Activated CD8-positive, alpha-beta T cell treated with anti-CD3 and anti-CD28 coated beads for 36 hours (primary cell): ENCODE measurements at regions of chr16 and their contacts with region 1.

Region 1: DNA sequence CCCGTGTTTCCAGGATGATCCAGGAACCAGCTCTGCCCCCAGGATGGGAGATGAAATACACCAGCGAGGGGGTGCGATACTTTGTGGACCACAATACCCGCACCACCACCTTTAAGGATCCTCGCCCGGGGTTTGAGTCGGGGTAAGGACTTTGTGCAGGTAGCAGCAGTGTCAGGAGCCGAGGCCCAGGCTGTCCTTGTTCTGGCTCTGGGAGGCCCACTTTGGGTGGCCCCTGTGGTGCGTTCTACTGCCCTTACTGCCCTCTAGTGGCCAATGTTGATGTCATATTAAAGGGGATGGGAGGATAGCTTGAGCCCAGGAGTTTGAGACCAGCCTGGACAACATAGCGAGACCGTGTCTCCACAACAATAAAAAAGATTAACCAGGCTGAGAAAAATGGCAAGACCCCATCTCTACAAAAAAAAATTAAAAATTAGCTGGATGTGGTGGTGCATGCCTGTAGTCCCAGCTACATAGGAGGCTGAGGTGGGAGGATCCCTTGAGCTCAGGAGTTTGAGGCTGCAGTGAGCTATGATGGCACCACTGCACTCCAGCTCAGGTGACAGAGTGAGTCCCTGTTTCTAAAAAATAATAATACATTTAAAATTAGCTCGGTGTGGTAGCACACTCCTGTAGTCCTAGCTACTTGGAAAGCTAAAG is 20.9 kb upstream of the CLEC18A start:
- DNase-seq: peak; percentile 66
- ATAC-seq: peak; percentile 88
- H3K4me3 Mint-ChIP-seq: no peak overlapping the region
- H3K27ac Mint-ChIP-seq: no peak overlapping the region
- H3K4me1 Mint-ChIP-seq: no peaks in the 10 kb centered on the region
- H3K27me3 Mint-ChIP-seq: no peaks in the 10 kb centered on the region
- CTCF ChIP-seq: peak; percentile 78

Region 2: DNA sequence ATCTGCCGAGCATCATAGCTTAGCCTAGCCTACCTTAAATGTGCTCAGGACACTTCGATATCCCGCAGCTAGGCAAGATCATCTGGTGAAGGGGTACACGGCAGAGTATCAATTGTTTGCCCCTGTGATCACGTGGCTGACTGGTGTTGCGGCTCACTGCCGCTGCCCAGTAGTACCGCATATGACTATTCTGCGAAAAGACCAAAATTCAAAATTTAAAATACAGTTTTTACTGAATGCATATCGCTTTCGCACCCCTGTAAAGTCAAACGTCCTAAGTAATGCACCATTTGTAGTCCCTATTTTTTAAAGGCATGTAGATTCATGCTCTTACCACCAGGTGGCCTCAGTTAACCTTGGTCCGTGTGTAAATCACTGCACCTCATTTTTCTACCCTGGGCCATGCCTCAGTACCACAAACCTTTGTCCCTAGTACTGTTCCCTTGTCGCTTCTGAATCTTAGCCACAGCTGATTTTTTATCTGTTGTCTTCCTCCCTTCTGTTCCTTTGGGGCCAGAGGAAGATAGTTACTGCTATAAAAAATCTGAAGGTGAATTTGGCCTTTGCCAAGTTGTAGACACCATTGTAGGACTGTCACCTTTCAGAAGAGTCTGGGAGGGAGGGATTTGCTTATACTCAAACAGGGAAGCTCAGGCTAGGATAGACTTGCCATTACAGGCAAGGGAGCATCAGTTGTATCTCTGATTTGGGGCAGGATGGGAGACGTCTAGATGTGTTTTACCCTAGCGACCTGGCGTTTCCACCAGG is 133.7 kb before region 1 on chr16:
- CTCF ChIA-PET with region 1: interaction called, 45 read pairs
- POLR2A ChIA-PET with region 1: no interaction called
- intact Hi-C with region 1: loop called (anchors 5 kb)
- DNase-seq: peak; percentile 32
- ATAC-seq: peak; percentile 80
- H3K4me3 Mint-ChIP-seq: no peak overlapping the region
- H3K27ac Mint-ChIP-seq: no peak overlapping the region
- H3K4me1 Mint-ChIP-seq: no peaks in the 10 kb centered on the region
- H3K27me3 Mint-ChIP-seq: no peaks in the 10 kb centered on the region
- CTCF ChIP-seq: peak; percentile 76

Region 3: DNA sequence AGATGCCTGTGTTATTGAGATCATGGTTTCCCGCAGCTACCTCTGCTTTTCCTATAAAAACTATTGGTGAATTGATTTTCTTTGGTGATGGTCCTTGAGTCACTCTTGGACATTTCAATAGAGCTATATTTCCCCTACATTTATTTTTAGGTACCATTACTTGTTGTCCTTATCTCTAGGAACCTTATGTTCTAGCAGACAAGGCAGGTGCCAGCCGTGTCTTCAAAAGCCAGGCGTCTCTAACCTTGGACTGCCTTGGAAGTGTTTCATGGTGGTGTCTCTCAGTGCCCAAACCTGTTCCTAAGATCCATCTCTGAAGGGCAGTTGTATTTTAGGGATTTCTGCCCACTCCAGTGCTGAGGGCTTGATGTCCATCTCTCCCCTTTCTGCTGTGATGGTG is 56.5 kb before region 1 on chr16:
- CTCF ChIA-PET with region 1: interaction called, 10 read pairs
- POLR2A ChIA-PET with region 1: no interaction called
- intact Hi-C with region 1: no loop called
- DNase-seq: no peak
- ATAC-seq: no peak
- H3K4me3 Mint-ChIP-seq: no peak overlapping the region
- H3K27ac Mint-ChIP-seq: no peak overlapping the region
- H3K4me1 Mint-ChIP-seq: no peaks in the 10 kb centered on the region
- H3K27me3 Mint-ChIP-seq: no peaks in the 10 kb centered on the region
- CTCF ChIP-seq: no peak

Region 4: GRCh38 chr16:69906838-69907401 is 23.3 kb before region 1 on chr16:
- CTCF ChIA-PET with region 1: interaction called, 17 read pairs
- POLR2A ChIA-PET with region 1: no interaction called
- intact Hi-C with region 1: no loop called
- DNase-seq: no peak
- ATAC-seq: no peak
- H3K4me3 Mint-ChIP-seq: no peak overlapping the region
- H3K27ac Mint-ChIP-seq: no peak overlapping the region
- H3K4me1 Mint-ChIP-seq: no peaks in the 10 kb centered on the region
- H3K27me3 Mint-ChIP-seq: no peaks in the 10 kb centered on the region
- CTCF ChIP-seq: no peak

Region 5: GRCh38 chr16:69917739-69918138 is 12.5 kb before region 1 on chr16:
- CTCF ChIA-PET with region 1: interaction called, 18 read pairs
- POLR2A ChIA-PET with region 1: interaction called, 5 read pairs
- intact Hi-C with region 1: no loop called
- DNase-seq: no peak
- ATAC-seq: no peak
- H3K4me3 Mint-ChIP-seq: no peak overlapping the region
- H3K27ac Mint-ChIP-seq: no peak overlapping the region
- H3K4me1 Mint-ChIP-seq: no peaks in the 10 kb centered on the region
- H3K27me3 Mint-ChIP-seq: no peaks in the 10 kb centered on the region
- CTCF ChIP-seq: no peak